ENCODE measurements at regions of chr19 and their contacts with region 1.

Region 1: DNA sequence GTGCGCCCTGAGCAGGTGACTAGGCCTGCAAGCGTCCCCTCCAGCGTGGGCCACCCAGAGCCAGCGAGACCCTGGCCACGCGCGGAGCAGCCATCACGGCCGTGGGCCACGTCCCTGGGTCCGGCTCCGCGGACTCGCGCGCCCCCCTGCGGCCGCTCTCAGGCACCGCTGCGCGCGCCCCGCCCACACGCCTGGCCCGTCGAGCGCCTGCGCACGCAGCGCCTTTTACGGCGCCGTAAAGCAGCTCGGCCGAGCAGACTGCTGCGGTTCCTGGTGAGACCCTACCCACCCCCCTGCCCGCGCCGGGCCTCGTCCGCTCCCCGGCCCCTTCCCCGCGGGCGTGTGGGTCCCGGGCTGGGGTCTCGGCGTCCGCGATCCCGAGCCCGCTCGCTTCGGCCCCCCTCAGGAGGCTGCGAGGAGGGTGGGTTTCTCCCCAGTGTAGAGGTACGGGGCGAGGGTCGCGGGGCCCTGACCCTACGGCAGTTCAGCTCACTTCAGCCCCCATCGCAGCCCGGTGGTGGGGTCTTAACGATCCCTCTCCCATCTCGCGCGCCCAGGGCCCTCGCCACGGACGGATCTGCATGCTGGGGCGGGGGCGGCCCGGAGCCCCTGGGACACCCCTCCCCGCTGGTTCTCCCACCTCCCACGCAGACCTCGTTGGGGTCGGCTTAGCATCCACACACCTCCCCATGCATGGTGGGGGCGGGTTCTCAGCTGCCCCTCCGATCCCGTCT is at the start of gene TRAPPC5:
- DNase-seq: peak; percentile 89 to 92
- ATAC-seq: peak; percentile 89 to 96 (median 93)
- H3K4me3 ChIP-seq: peak within 1 kb of the TSS; percentile 100
- H3K27ac ChIP-seq: peak within 1 kb of the TSS; percentile 93
- H3K4me1 ChIP-seq: no peaks in the 10 kb centered on the region
- H3K27me3 ChIP-seq: peaks cover 0 to 11% (median 0%) of the 10 kb centered on the region in 3 donors
- CTCF ChIP-seq: peak; percentile 98
- total RNA-seq, gene TRAPPC5: 83.4 to 164 (median 104) TPM

Region 2: DNA sequence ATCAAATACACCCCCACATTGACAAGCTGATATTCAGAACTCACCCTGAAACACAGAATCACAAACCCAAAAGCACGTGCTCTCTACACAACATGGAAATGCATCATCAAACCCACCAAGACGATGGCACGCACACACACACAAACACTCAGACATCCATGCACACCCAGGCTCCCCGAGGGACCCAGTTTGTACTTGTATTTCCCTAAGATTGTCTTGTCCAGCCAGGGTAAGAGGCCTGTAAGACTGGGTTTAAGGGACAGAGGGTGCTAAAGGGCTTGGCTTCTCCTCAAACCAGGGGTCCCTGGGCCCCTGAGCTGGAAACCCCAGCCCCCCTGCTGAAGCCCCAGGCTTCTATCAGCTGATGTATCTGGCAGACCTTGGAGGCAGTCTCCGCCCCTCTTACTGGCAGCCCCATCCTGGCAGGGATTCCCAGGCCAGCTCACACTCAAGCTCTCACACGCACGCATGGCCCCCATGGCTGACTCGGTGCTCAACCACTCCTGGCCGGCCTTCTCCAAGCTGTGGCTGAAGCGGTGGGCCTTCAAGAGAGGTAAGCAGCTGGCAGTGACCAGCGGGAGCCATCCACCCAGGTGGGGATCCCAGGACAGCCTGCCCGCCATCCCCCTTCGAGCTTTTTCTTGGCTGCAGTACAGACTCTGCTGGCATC is 325.5 kb before region 1 on chr19:
- intact Hi-C with region 1: loop called in 1 of 2 experiments (anchors 5 kb)
- DNase-seq: no peak
- ATAC-seq: no peak
- H3K4me3 ChIP-seq: no peak overlapping the region
- H3K27ac ChIP-seq: no peak overlapping the region
- H3K4me1 ChIP-seq: no peaks in the 10 kb centered on the region
- H3K27me3 ChIP-seq: peaks cover 0 to 7% (median 0%) of the 10 kb centered on the region in 3 donors
- CTCF ChIP-seq: no peak

Region 3: DNA sequence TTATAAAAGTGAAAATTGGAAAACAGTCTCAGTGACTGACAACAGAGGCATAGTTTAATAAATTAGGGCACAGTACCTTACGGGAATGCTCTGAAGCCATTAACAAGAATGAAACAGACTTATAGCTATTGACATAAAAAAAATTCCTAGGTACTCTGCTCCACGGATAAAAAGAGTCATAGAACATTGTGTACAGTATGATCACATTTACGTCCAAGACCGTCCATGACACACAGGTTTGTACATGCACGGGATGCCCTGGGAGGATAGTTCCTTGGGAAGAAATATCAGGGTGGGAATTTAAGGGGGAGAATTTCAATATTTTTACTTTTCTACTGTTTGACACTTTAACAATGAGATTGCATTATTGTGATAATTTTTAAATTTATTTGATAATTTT is 110.0 kb before region 1 on chr19:
- intact Hi-C with region 1: loop called (anchors 2 to 5 kb)
- DNase-seq: no peak
- ATAC-seq: no peak
- H3K4me3 ChIP-seq: no peak overlapping the region
- H3K27ac ChIP-seq: no peak overlapping the region
- H3K4me1 ChIP-seq: no peaks in the 10 kb centered on the region
- H3K27me3 ChIP-seq: peaks cover 0 to 3% (median 0%) of the 10 kb centered on the region in 3 donors
- CTCF ChIP-seq: no peak

Region 4: GRCh38 chr19:7652061-7652641 is 28.6 kb before region 1 on chr19:
- intact Hi-C with region 1: loop called (anchors 1 to 2 kb)
- DNase-seq: peak; percentile 83 to 90
- ATAC-seq: peak; percentile 98 to 100 (median 100)
- H3K4me3 ChIP-seq: peak overlapping the region; percentile 38
- H3K27ac ChIP-seq: peak overlapping the region; percentile 79
- H3K4me1 ChIP-seq: peaks cover 4% of the 10 kb centered on the region
- H3K27me3 ChIP-seq: no peaks in the 10 kb centered on the region
- CTCF ChIP-seq: peak; percentile 99

Measured in psoas muscle (tissue), 8 donors.